WTC11 (cell line): ENCODE measurements at regions of chr14 and their contacts with region 1.

Region 1: GRCh38 chr14:96852823-96853422 is 55.7 kb downstream of the VRK1 start:
- DNase-seq: no peak
- ATAC-seq: no peak
- H3K4me3 Mint-ChIP-seq: no peak overlapping the region
- H3K27ac Mint-ChIP-seq: peak overlapping the region; percentile 58; the same call in 1 of the 2 replicates
- H3K4me1 Mint-ChIP-seq: 0 out of 2 replicates have a peak, but pooled peaks cover 7% of the 10 kb centered on the region
- H3K27me3 Mint-ChIP-seq: no peaks in the 10 kb centered on the region
- CTCF ChIP-seq: peak; percentile 60

Region 2: GRCh38 chr14:96772929-96773328 is 80.0 kb before region 1 on chr14:
- CTCF ChIA-PET with region 1: no interaction called
- POLR2A ChIA-PET with region 1: no interaction called
- DNase-seq: no peak
- ATAC-seq: no peak
- H3K4me3 Mint-ChIP-seq: no peak overlapping the region
- H3K27ac Mint-ChIP-seq: no peak overlapping the region
- H3K4me1 Mint-ChIP-seq: no peaks in the 10 kb centered on the region
- H3K27me3 Mint-ChIP-seq: peaks cover 15% of the 10 kb centered on the region
- CTCF ChIP-seq: no peak

Region 3: DNA sequence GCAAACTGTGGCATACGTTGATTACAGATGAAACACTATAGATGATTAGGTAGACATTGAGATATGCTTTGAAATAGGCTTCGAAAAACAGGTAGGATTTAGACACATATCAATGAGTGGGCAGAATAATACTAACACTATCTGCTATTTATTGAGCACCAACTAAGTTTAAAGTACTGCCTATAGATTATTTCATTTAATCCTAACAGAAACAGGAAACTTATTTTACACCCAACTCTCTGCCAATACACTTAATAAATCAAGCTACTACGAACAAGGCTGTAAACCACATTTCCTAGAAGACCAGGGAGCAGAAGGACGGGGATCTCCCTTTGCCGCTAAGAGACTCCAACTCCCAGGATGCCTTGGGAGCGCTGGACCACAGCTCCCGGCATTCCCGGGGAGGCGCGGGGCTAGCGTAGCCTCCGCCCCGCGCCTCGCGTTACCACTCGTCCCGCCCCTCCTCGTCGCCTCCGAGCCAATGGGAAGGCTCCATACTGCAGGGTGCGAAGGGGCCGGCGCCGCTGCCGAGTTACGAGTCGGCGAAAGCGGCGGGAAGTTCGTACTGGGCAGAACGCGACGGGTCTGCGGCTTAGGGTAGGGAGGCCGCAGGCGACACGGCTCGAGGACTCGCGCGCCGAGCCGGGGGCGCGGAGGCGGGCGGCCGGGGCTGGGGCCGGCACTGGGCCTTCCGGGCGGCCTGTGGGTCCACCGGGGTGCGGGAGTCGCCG is 55.9 kb before region 1 on chr14 and contains the start of gene VRK1:
- CTCF ChIA-PET with region 1: interaction called, 15 read pairs
- POLR2A ChIA-PET with region 1: interaction called, 4 read pairs
- DNase-seq: peak; percentile 97
- ATAC-seq: peak; percentile 99
- H3K4me3 Mint-ChIP-seq: peak within 1 kb of the TSS; percentile 89
- H3K27ac Mint-ChIP-seq: peak within 1 kb of the TSS; percentile 74
- H3K4me1 Mint-ChIP-seq: peaks cover 22% of the 10 kb centered on the region
- H3K27me3 Mint-ChIP-seq: peaks cover 6% of the 10 kb centered on the region; the same call in 1 of the 2 replicates
- CTCF ChIP-seq: no peak
- total RNA-seq, gene VRK1: 67.3 to 73.6 TPM (median 69.6 TPM) in 3 replicates

Region 4: GRCh38 chr14:96867634-96868033 is 14.7 kb after region 1 on chr14:
- CTCF ChIA-PET with region 1: interaction called, 32 read pairs
- POLR2A ChIA-PET with region 1: no interaction called
- DNase-seq: no peak
- ATAC-seq: no peak
- H3K4me3 Mint-ChIP-seq: peak overlapping the region; percentile 11; the same call in 1 of the 2 replicates
- H3K27ac Mint-ChIP-seq: peak overlapping the region; percentile 27
- H3K4me1 Mint-ChIP-seq: peaks cover 48% of the 10 kb centered on the region
- H3K27me3 Mint-ChIP-seq: no peaks in the 10 kb centered on the region
- CTCF ChIP-seq: no peak

Region 5: GRCh38 chr14:97266653-97267052 is 413.7 kb after region 1 on chr14:
- CTCF ChIA-PET with region 1: no interaction called
- POLR2A ChIA-PET with region 1: no interaction called
- DNase-seq: no peak
- ATAC-seq: peak; percentile 61
- H3K4me3 Mint-ChIP-seq: no peak overlapping the region
- H3K27ac Mint-ChIP-seq: no peak overlapping the region
- H3K4me1 Mint-ChIP-seq: peaks cover 20% of the 10 kb centered on the region
- H3K27me3 Mint-ChIP-seq: no peaks in the 10 kb centered on the region; the same call in 1 of the 2 replicates
- CTCF ChIP-seq: no peak